Activated CD4-positive, alpha-beta T cell treated with anti-CD3 and anti-CD28 coated beads for 36 hours (primary cell): ENCODE measurements at regions of chr7 and their contacts with region 1.

Region 1: DNA sequence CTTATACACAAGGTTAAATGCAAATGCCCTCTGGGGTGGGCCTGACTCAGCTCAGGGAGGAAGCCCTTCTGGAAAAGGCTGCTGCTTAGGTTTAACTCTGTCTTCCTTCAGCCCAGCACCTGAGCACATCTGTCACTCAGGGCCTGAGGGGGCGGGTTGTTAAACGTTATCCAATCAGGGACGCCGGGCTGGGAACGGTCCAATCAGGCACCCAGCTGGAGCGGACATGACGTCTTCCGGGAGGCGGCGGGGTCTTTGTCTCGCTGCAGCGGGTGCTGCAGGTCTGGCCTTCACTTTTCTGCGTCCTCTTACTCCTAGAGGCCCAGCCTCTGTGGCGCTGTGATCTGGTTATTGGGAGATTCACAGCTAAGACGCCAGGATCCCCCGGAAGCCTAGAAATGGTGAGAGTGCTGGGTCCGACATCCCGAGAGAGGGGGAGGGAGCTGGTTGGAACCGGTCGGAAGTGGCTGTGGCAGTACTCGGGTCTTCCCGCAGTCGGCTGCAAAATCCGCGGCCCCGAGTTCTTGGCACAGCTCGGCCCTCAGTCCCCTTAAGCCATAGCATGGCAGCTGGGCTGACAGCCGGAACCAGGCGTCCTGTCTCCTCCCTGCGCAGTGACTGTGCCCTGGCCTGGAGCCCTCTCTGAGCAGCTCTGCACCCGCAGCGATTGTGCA is at the start of gene ZNF138:
- DNase-seq: peak; percentile 97
- ATAC-seq: peak; percentile 100
- H3K4me3 Mint-ChIP-seq: peak within 1 kb of the TSS; percentile 97
- H3K27ac Mint-ChIP-seq: peak within 1 kb of the TSS; percentile 99
- H3K4me1 Mint-ChIP-seq: peaks cover 23% of the 10 kb centered on the region
- H3K27me3 Mint-ChIP-seq: no peaks in the 10 kb centered on the region
- total RNA-seq, gene ZNF138: 12.0 to 19.6 TPM

Region 2: GRCh38 chr7:64307254-64308015 is 486.9 kb before region 1 on chr7:
- CTCF ChIA-PET with region 1: no interaction called
- POLR2A ChIA-PET with region 1: no interaction called
- intact Hi-C with region 1: loop called in 1 of 2 experiments (anchors 2 kb)
- DNase-seq: peak; percentile 95
- ATAC-seq: peak; percentile 97
- H3K4me3 Mint-ChIP-seq: peak overlapping the region; percentile 84
- H3K27ac Mint-ChIP-seq: peak overlapping the region; percentile 91
- H3K4me1 Mint-ChIP-seq: peaks cover 25% of the 10 kb centered on the region
- H3K27me3 Mint-ChIP-seq: no peaks in the 10 kb centered on the region

Region 3: DNA sequence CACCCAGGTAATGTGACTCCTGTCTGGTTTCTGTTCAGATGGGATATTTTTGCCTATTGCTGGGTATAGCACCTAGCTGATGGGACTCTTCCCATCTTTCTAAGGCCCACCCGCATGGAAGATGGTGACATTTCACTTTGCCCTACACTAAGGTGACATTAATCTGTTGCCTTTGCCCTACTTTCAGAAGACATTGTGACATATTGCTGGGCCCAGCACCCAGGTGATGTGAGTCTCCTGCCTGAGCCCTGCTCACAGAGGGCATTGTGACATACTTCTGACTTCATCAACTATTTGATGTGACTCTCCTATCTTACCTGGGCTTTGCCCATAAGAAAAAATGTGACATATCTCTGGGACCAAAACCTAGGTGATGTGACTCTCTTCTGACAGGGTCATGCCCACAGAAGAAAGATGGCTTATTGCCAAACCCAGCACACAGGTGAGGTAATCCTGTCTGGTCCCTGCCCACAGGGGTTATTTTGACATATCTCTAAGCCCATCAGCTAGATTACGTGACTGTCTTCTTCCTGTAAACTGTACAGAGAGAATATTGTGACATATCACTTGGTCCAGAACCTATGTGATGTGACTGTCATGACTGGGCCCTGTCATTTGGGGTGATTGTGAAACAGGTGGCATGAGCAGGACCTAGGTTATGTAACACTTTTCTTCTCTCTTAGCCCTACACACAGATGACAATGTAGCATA is 182.7 kb before region 1 on chr7:
- CTCF ChIA-PET with region 1: no interaction called
- POLR2A ChIA-PET with region 1: no interaction called
- intact Hi-C with region 1: no loop called
- DNase-seq: no peak
- ATAC-seq: no peak
- H3K4me3 Mint-ChIP-seq: no peak overlapping the region
- H3K27ac Mint-ChIP-seq: no peak overlapping the region
- H3K4me1 Mint-ChIP-seq: no peaks in the 10 kb centered on the region
- H3K27me3 Mint-ChIP-seq: no peaks in the 10 kb centered on the region